ENCODE measurements at regions of chr7 and their contacts with region 1.

Region 1: DNA sequence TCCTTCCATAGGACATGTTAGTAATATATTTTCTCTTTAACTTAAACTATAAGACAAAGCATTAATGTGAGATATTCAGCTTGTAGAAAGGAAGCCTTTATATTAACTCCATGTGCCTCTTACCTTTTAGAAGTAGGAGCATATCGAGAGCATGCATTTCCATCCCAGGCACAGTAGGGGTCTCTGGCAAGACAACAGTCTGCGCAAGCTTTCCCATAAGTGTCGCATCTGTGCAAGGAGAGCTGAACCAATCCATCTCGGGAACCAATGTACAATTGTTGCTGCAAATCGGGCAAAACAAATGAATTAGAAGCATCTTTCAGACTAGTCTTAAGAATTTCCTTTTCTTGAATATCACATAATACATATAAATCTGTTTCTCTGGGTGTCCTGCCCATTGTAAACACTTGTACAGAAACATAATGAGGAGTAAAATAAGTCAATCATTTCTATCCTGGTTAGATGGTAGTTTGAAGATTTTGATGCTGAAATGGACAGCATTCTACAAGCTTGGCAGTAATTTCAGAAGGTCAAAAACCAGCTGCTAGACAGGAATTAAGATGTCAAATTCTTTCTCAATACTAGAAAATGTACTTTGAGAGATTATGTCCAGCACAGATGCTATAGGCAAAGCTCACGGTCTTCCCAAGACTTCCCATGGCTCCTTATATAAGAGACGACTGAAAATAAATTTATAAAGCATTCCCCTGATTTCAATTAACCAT is 171.8 kb downstream of the SEMA3D start:
- DNase-seq: peak; percentile 57
- H3K4me3 ChIP-seq: no peak overlapping the region
- H3K27ac ChIP-seq: no peak overlapping the region
- H3K4me1 ChIP-seq: no peaks in the 10 kb centered on the region
- H3K27me3 ChIP-seq: no peaks in the 10 kb centered on the region
- CTCF ChIP-seq: peak; percentile 37; the same call in 1 of the 2 replicates

Region 2: GRCh38 chr7:84194543-84195271 is 820.4 kb before region 1 on chr7 and contains the start of gene SEMA3A:
- CTCF ChIA-PET with region 1: no interaction called
- POLR2A ChIA-PET with region 1: no interaction called
- intact Hi-C with region 1: loop called (anchors 5 kb)
- DNase-seq: peak; percentile 81
- H3K4me3 ChIP-seq: peak within 1 kb of the TSS; percentile 56
- H3K27ac ChIP-seq: peak within 1 kb of the TSS; percentile 59
- H3K4me1 ChIP-seq: peaks cover 23% of the 10 kb centered on the region
- H3K27me3 ChIP-seq: no peaks in the 10 kb centered on the region
- CTCF ChIP-seq: no peak
- total RNA-seq, gene SEMA3A: 22.8 and 26.9 TPM in 2 replicates

Region 3: GRCh38 chr7:84336303-84336702 is 678.8 kb before region 1 on chr7:
- CTCF ChIA-PET with region 1: no interaction called
- POLR2A ChIA-PET with region 1: no interaction called
- intact Hi-C with region 1: loop called (anchors 10 kb)
- DNase-seq: no peak
- H3K4me3 ChIP-seq: no peak overlapping the region
- H3K27ac ChIP-seq: no peak overlapping the region
- H3K4me1 ChIP-seq: no peaks in the 10 kb centered on the region
- H3K27me3 ChIP-seq: no peaks in the 10 kb centered on the region
- CTCF ChIP-seq: no peak

Region 4: DNA sequence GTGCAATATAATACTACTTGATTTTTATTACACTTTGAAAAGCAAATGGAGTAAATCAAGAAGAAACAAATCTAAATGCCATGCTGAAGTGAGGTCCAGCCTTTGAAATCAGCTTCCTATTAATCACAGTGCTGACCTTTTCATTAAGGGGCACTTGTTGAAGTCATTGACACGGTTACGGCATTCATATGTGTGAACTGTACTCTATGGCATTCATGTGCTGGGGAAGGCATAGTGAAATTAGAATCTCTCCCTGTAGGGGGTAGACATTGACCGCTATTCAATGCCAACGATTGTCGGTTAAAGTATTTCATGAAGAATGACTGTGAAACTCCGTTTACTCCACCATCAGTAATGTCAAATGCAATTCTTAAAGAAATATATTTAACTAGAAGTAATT is 524.4 kb before region 1 on chr7:
- CTCF ChIA-PET with region 1: no interaction called
- POLR2A ChIA-PET with region 1: no interaction called
- intact Hi-C with region 1: loop called (anchors 10 kb)
- DNase-seq: no peak
- H3K4me3 ChIP-seq: no peak overlapping the region
- H3K27ac ChIP-seq: no peak overlapping the region
- H3K4me1 ChIP-seq: no peaks in the 10 kb centered on the region
- H3K27me3 ChIP-seq: no peaks in the 10 kb centered on the region
- CTCF ChIP-seq: 0 out of 2 replicates have a peak, but pooled peaks have one; percentile 18

Region 5: GRCh38 chr7:84914598-84914997 is 100.5 kb before region 1 on chr7:
- CTCF ChIA-PET with region 1: no interaction called
- POLR2A ChIA-PET with region 1: no interaction called
- intact Hi-C with region 1: loop called (anchors 5 kb)
- DNase-seq: peak; percentile 5
- H3K4me3 ChIP-seq: no peak overlapping the region
- H3K27ac ChIP-seq: no peak overlapping the region
- H3K4me1 ChIP-seq: no peaks in the 10 kb centered on the region
- H3K27me3 ChIP-seq: no peaks in the 10 kb centered on the region
- CTCF ChIP-seq: no peak